ENCODE measurements at regions of chr12 and their contacts with region 1.

Region 1: GRCh38 chr12:116183741-116184141 is 93.8 kb downstream of the MED13L start:
- DNase-seq: no peak
- ATAC-seq: no peak

Region 2: GRCh38 chr12:116222358-116222757 is 38.6 kb after region 1 on chr12:
- intact Hi-C with region 1: loop called (anchors 5 kb)
- DNase-seq: no peak
- ATAC-seq: peak; percentile 66

Measured in Right ventricle myocardium inferior (tissue), 1 donor.